ENCODE measurements at regions of chr12 and their contacts with region 1.

Region 1: DNA sequence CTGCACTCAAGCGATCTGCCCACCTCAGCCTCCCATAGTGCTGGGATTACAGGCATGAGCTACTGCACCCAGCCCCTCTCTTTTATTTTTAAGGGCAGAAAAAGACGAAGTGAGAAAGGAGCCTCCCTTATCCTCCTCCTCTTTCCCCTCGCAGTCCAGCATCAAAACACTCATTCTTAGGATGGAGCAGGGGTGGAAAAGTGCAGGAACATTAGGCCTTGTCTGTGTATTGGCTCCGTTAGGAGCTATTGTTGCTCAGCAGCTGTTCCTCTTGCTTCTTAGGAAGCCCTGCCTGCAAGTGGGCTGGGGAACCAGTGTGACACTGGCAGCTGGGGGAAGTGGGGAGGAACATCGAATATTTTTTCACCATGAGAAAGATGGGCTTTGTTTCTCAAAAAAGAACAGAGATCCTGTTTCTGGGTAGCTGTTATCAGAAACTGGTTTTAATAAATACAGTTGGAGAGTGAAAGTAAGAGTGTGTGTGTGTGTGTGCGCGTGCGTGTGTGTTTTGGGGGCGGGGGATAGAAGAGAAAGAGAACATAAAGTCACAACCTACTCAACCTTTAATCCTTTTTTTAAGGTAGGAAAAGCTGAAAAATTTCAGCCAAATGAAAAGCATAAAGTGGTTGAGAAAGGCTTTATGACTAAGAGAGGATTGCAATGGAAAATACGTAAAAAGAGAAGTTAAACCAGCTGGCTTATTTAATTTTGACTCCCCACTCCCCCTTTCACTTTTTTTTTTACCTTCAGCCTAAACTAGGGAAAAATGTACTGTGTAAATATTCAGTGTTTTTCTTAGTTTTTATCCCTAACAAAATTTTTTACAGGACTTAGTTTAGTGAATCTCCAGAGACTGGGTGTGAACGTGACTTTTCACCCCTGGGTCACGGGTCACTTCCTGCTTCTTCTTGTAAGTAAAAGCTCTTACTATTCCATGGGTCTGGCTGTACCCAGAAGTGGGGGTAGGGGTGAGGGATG is 197.2 kb upstream of the PLEKHG7 start:
- DNase-seq: peak; percentile 77
- H3K4me3 Mint-ChIP-seq: peak overlapping the region; percentile 69
- H3K27ac Mint-ChIP-seq: peak overlapping the region; percentile 89
- H3K4me1 Mint-ChIP-seq: peaks cover 56% of the 10 kb centered on the region
- H3K27me3 Mint-ChIP-seq: no peaks in the 10 kb centered on the region

Region 2: GRCh38 chr12:91577586-91578539 is 927.7 kb before region 1 on chr12:
- CTCF ChIA-PET with region 1: no interaction called
- intact Hi-C with region 1: loop called (anchors 5 kb)
- DNase-seq: no peak
- H3K4me3 Mint-ChIP-seq: peak overlapping the region; percentile 71
- H3K27ac Mint-ChIP-seq: peak overlapping the region; percentile 61
- H3K4me1 Mint-ChIP-seq: peaks cover 19% of the 10 kb centered on the region
- H3K27me3 Mint-ChIP-seq: no peaks in the 10 kb centered on the region

Region 3: GRCh38 chr12:92065018-92065499 is 440.5 kb before region 1 on chr12:
- CTCF ChIA-PET with region 1: no interaction called
- intact Hi-C with region 1: loop called (anchors 1 kb)
- DNase-seq: peak; percentile 86
- H3K4me3 Mint-ChIP-seq: peak overlapping the region; percentile 22
- H3K27ac Mint-ChIP-seq: peak overlapping the region; percentile 84
- H3K4me1 Mint-ChIP-seq: peaks cover 65% of the 10 kb centered on the region
- H3K27me3 Mint-ChIP-seq: no peaks in the 10 kb centered on the region

Region 4: DNA sequence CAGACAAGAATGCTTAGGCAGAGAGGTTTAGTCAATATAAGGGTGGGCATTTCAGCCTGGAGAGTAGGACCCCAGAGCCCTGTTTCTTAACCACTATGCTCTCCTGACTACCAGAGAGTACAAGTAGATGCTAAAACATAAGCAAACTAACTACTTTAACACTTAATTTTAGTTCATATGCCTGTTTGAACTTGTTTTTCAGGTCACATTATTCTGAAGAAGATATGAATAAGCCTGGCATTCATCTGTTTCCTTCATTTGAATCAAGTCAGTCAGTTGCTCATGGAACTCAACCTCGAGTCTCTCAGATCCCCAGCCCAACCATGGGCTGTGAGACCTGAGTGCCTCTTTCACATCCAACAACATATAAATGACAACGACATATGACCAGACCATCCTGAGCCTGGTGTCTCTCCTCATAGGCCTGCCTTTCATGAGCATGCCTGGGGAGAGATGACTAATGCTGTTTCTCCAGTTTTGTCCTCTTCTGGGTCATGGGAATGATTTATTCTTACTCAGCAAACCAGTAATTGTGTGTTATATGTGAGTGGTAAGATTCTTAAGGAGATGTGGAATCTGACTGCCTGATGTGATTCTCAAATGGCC is 108.8 kb before region 1 on chr12:
- CTCF ChIA-PET with region 1: interaction called, 3 read pairs
- intact Hi-C with region 1: loop called (anchors 1 kb)
- DNase-seq: peak; percentile 39
- H3K4me3 Mint-ChIP-seq: no peak overlapping the region
- H3K27ac Mint-ChIP-seq: peak overlapping the region; percentile 73
- H3K4me1 Mint-ChIP-seq: peaks cover 97% of the 10 kb centered on the region
- H3K27me3 Mint-ChIP-seq: no peaks in the 10 kb centered on the region

Region 5: GRCh38 chr12:92516277-92516600 is 10.7 kb after region 1 on chr12:
- CTCF ChIA-PET with region 1: interaction called, 12 read pairs
- intact Hi-C with region 1: no loop called
- DNase-seq: peak; percentile 72
- H3K4me3 Mint-ChIP-seq: peak overlapping the region; percentile 61
- H3K27ac Mint-ChIP-seq: peak overlapping the region; percentile 92
- H3K4me1 Mint-ChIP-seq: peaks cover 46% of the 10 kb centered on the region
- H3K27me3 Mint-ChIP-seq: no peaks in the 10 kb centered on the region

Region 6: GRCh38 chr12:92593734-92594402 is 88.3 kb after region 1 on chr12:
- CTCF ChIA-PET with region 1: interaction called, 10 read pairs
- intact Hi-C with region 1: loop called (anchors 1 kb)
- DNase-seq: peak; percentile 87
- H3K4me3 Mint-ChIP-seq: peak overlapping the region; percentile 55
- H3K27ac Mint-ChIP-seq: peak overlapping the region; percentile 96
- H3K4me1 Mint-ChIP-seq: peaks cover 78% of the 10 kb centered on the region
- H3K27me3 Mint-ChIP-seq: no peaks in the 10 kb centered on the region